PC-3 (cell line): ENCODE measurements at regions of chrX and their contacts with region 1.

Region 1: GRCh38 chrX:53939127-53939526 is 105.1 kb downstream of the PHF8 start:
- DNase-seq: no peak
- ATAC-seq: no peak
- H3K4me3 ChIP-seq: no peak overlapping the region
- H3K27ac ChIP-seq: no peak overlapping the region
- H3K4me1 ChIP-seq: no peaks in the 10 kb centered on the region
- H3K27me3 ChIP-seq: no peaks in the 10 kb centered on the region
- CTCF ChIP-seq: no peak

Region 2: GRCh38 chrX:53538781-53539180 is 400.3 kb before region 1 on chrX:
- CTCF ChIA-PET with region 1: no interaction called
- POLR2A ChIA-PET with region 1: interaction called, 32 read pairs
- intact Hi-C with region 1: no loop called
- DNase-seq: no peak
- ATAC-seq: no peak
- H3K4me3 ChIP-seq: no peak overlapping the region
- H3K27ac ChIP-seq: no peak overlapping the region
- H3K4me1 ChIP-seq: peaks cover 5% of the 10 kb centered on the region
- H3K27me3 ChIP-seq: no peaks in the 10 kb centered on the region
- CTCF ChIP-seq: no peak